Dorsolateral prefrontal cortex (tissue), 120 donors: ENCODE measurements at regions of chr1 and their contacts with region 1.

Region 1: GRCh38 chr1:70509996-70510876 is 99.2 kb downstream of the CTH start:
- DNase-seq: no peak
- H3K4me3 ChIP-seq: no peak overlapping the region
- H3K27ac ChIP-seq: no peak overlapping the region
- H3K27me3 ChIP-seq: peaks cover 0 to 4% (median 0%) of the 10 kb centered on the region in 45 donors
- CTCF ChIP-seq: peak; percentile 54 to 91 (median 72)

Region 2: DNA sequence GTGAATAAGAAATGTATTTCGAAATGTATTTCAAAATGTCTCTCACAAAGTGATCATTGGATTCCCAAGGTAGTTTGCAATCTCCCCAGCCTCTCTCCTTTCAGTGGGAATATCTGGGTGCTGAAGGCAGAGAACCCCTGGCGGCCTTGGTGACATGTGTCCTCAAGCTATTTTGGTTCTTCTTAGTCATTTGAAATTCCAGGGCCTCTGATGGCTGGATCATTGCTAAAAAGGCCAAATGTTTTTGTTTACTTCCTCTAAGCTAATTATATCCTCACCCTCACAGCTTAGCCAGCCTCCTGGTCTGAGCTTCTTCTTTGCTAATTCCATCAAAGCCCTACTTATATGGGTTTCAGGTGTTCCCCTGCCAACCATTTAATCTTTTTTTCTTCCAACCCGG is 376.1 kb before region 1 on chr1:
- intact Hi-C with region 1: loop called (anchors 2 to 5 kb)
- DNase-seq: no peak
- H3K4me3 ChIP-seq: no peak overlapping the region
- H3K27ac ChIP-seq: peak overlapping the region in 3 of 59 donors; percentile 6 to 35 (median 22)
- H3K27me3 ChIP-seq: no peaks in the 10 kb centered on the region
- CTCF ChIP-seq: no peak

Region 3: GRCh38 chr1:70436622-70437251 is 73.5 kb before region 1 on chr1:
- intact Hi-C with region 1: loop called in 1 of 2 experiments (anchors 5 kb)
- DNase-seq: no peak
- H3K4me3 ChIP-seq: no peak overlapping the region
- H3K27ac ChIP-seq: no peak overlapping the region
- H3K27me3 ChIP-seq: no peaks in the 10 kb centered on the region
- CTCF ChIP-seq: peak in 49 of 56 donors; percentile 12 to 66 (median 42)